ENCODE measurements at regions of chrX and their contacts with region 1.

Region 1: DNA sequence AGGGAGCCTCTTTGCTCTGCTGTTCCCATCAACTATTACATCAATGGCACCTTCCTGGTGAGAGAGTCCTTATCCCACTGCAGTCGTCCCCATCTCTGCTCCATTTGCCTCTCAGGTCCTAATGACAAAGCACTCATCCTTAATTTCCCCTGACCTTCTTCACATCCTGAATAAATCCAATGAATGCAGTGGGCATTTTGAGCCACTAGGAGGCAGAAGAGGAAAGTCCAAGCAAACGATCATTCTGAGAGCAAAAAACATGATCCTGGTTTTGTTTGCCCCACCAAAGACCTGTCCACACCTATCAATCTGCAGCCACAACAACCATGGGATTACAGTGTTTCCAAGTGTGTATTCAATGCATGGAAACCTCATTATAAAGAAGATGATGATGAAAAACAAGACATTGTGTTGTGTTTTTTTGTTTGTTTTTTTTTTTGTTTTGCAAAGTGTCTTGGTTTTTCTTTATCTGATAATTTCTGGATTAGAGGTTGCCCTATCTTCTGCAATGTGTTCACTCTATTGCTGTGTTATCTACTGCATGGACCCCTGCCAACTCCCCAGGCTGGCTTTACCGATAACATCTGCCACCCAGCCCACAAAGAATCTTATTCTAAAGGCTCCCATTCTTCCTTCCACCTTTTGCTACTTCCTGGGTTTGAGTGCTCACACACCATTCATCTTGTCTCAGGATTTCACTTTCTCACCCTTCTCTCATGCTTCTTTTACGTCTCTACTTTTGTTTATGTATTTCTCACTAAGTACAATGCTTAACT is 207.2 kb downstream of the NLGN4X start:
- DNase-seq: peak; percentile 35
- H3K4me3 ChIP-seq: no peak overlapping the region
- H3K27ac ChIP-seq: no peak overlapping the region
- H3K4me1 ChIP-seq: no peaks in the 10 kb centered on the region
- CTCF ChIP-seq: peak; percentile 74

Region 2: DNA sequence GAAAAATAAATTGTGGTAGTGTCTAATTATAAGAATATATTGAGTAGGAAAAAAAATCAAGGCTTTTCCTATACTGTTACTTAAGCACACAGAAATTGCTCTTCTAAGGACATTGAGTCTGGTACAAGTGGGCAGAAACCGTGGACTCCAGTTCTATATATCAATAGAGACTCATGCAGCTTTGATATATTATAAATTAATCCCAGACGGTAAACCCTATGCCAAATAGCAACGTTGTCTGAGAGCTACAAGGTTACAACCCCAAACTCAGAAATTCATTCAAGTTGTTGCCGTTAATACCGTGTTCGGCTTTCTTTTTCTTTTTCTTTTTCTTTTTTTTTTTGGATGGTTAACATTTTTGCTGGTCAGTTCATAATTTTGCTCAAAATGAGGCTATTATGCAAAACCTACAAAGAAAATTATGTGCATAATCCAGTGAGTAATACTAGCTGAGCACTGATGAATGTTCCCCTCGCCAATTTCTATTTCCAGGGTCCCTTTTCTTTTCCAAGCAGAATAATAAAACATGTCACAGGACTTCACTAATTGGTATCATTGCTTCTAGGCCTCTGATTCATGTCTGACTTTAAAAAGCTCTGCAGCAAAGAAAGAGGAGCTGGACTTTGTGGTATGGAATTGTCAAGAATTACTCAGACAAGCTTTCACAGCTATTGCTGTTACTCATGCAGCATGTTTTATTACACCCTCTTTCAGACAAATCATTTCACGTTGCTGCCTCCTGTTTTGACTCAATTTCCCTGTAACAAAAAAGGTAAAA is 530.5 kb before region 1 on chrX:
- CTCF ChIA-PET with region 1: no interaction called
- POLR2A ChIA-PET with region 1: no interaction called
- intact Hi-C with region 1: no loop called
- DNase-seq: no peak
- H3K4me3 ChIP-seq: no peak overlapping the region
- H3K27ac ChIP-seq: no peak overlapping the region
- H3K4me1 ChIP-seq: no peaks in the 10 kb centered on the region
- CTCF ChIP-seq: no peak

Region 3: DNA sequence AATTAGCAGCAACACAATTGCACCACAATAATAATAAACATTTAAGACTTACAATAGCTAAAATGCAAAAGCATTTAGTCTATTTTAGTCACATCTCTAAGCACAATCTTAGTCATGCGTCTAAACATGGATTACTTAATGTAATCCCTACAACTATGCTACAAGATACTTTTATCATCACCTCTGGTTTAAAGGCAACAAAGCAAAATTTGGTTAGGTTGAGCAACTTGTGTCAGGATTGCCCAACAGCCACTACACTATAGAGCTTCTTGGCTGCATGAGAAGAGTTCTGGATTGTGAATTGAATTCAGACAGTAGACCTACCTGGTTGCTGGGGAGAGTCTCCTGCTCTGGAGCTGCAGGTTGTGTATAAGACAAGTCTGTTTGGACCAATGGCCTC is 1273.0 kb after region 1 on chrX:
- CTCF ChIA-PET with region 1: no interaction called
- POLR2A ChIA-PET with region 1: no interaction called
- intact Hi-C with region 1: loop called (anchors 10 kb)
- DNase-seq: no peak
- H3K4me3 ChIP-seq: no peak overlapping the region
- H3K27ac ChIP-seq: no peak overlapping the region
- H3K4me1 ChIP-seq: no peaks in the 10 kb centered on the region
- CTCF ChIP-seq: no peak